AG04450 (cell line): ENCODE measurements at regions of chr3 and their contacts with region 1.

Region 1: DNA sequence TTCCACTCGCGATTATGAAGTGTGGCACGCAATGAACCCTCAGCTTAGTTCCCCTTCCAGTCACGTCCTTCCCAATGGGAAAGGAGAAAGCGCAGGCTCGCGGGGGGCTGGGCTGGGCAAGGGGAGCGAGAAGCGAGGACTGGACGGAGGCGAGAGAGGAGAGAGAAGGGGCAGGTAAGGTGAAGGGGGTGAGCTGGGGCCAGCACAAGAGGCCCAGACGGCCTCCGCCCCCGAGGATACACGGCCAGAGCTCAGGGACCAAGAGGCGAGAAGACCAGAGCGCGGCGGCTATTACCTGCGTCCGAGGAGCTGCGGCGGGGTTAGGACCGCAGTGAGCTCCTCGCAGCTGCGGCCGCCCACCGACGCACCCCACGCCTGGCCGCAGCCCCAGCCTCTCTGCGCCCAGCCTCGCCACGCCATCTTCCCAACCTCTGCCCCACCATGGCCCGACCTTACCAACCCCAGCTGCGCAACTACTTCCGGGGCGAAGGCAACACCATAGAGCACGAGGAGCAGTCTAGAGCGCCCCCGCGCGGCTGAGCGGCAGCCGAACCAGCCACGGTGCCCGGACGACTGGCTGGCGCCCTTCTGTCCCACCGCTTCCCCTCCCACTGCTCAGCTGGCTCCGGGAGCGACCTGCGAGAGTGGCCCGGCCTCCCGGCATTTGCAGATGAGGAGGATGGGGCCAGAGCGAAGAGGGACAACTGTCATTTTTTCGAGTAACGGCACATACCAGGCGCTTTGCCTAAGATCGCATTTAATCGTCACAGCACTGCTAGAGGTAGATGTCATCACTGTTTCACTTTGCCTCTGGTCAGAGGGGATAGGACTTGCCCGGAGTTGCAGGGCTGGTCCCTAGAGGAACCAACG is at the start of gene PARL:
- DNase-seq: peak; percentile 57
- H3K4me3 ChIP-seq: peak within 1 kb of the TSS; percentile 97
- H3K27ac ChIP-seq: peak within 1 kb of the TSS; percentile 61
- H3K27me3 ChIP-seq: no peaks in the 10 kb centered on the region
- CTCF ChIP-seq: peak; percentile 93
- polyA plus RNA-seq, gene PARL: 45.9 and 46.2 TPM in 2 replicates

Region 2: DNA sequence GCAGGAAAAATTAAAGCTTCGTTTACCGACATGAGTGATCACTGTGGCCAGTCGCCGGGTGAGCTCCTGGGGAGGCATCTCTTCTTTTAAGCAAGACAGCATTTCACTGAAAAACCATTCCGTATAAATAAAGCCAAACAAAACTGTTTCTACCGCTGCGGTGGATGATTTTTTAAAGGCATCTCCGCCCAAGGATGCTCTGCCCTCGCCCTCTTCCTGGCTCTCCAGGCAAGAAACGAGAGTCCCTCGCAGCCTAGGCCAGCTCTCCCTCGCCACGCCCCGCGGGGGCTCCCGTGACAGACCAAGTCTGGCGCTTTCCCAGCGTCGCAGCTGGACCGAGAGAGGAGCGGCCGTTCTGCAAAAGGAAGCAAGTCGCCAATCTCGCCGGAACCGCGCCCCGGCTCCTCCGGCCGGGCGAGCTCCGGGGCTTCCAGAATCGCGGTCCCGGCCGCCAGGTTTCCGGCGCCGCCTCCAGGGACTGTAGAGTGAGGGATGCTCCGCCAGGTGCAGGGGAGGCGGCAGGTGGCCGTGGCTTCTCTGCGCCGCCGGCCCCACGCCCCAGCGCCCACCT is 456.7 kb before region 1 on chr3:
- CTCF ChIA-PET with region 1: no interaction called
- POLR2A ChIA-PET with region 1: no interaction called
- DNase-seq: no peak
- H3K4me3 ChIP-seq: peak overlapping the region; percentile 59
- H3K27ac ChIP-seq: no peak overlapping the region
- H3K27me3 ChIP-seq: peaks cover 62% of the 10 kb centered on the region
- CTCF ChIP-seq: no peak

Region 3: GRCh38 chr3:183468424-183468823 is 416.2 kb before region 1 on chr3:
- CTCF ChIA-PET with region 1: interaction called, 14 read pairs
- POLR2A ChIA-PET with region 1: no interaction called
- DNase-seq: no peak
- H3K4me3 ChIP-seq: no peak overlapping the region
- H3K27ac ChIP-seq: no peak overlapping the region
- H3K27me3 ChIP-seq: peaks cover 21% of the 10 kb centered on the region
- CTCF ChIP-seq: no peak

Region 4: DNA sequence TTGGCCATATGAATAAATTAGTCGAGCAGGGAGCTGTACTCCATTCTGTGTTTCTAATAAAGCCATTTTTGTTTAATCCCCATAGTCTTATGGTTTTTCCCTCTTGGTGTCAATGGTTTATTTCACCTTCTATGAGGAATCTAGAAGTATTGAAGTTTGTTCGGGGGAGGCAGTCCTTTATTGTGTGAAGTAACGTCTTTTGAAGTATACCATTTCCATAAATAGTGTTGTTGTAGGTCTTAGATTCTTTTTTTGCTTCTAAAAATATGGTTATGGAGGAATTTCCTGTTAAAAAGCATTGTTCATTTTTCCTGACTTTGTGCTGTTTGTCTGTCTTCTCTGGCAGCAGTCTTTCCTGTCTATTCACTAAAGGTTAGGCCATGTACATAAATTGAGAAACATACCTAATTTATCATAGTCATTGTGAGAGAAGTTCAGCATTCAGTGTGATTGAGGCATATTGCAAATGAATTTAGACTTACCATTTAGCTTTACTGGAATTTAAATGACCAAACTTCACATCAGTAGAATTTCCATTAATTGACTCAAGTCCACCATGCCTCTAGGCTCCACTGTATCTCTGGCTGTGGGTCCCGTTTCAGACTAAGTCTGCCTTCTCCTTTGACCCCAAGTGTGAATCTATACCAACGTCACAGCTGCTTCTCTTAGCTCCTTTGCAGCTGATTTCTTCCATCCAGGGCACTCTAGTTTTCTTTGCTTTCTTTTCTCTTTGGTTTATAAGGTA is 149.7 kb before region 1 on chr3:
- CTCF ChIA-PET with region 1: interaction called, 13 read pairs
- POLR2A ChIA-PET with region 1: no interaction called
- DNase-seq: no peak
- H3K4me3 ChIP-seq: no peak overlapping the region
- H3K27ac ChIP-seq: no peak overlapping the region
- H3K27me3 ChIP-seq: no peaks in the 10 kb centered on the region
- CTCF ChIP-seq: no peak

Region 5: GRCh38 chr3:183825456-183826161 is 59.1 kb before region 1 on chr3 and contains the start of gene MAP6D1:
- CTCF ChIA-PET with region 1: interaction called, 12 read pairs
- POLR2A ChIA-PET with region 1: interaction called, 7 read pairs
- DNase-seq: no peak
- H3K4me3 ChIP-seq: peak within 1 kb of the TSS; percentile 75
- H3K27ac ChIP-seq: no peak within 1 kb of the TSS
- H3K27me3 ChIP-seq: no peaks in the 10 kb centered on the region
- CTCF ChIP-seq: peak; percentile 52
- polyA plus RNA-seq, gene MAP6D1: 5.2 and 6.1 TPM in 2 replicates